OCI-LY7 (cell line): ENCODE measurements at regions of chr10 and their contacts with region 1.

Region 1: DNA sequence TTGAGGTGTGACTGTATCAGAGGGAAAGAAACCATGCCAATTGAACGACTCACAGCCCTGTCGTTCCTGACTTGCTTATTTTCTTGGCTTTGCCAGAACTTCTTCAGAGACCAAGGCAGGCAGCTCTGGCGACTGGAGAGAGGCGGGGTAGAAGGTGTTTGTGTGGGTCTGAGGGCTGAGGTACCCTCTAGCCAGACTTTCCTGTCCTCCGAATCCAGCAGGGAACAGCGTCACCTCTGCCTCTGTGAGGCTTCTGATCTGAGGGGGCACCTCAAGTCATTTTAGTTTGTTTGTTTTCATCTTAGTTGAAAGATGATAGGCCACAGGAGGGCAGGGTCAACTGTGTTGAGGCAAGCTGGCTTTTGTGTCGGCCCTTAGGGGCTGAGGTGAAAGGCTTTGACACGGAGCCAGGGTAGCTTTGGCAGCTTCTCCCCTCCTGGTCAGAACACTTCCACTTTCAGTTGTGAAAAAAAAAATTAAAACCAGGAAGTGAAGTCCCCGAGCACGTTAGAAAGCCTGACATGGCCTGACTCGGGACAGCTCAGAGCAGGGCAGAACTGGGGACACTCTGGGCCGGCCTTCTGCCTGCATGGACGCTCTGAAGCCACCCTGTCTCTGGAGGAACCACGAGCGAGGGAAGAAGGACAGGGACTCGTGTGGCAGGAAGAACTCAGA is 1.9 kb downstream of the ACSL5 start:
- DNase-seq: peak; percentile 80
- H3K4me3 ChIP-seq: peak overlapping the region; percentile 80
- H3K27ac ChIP-seq: peak overlapping the region; percentile 51
- H3K4me1 ChIP-seq: peaks cover 28% of the 10 kb centered on the region
- CTCF ChIP-seq: 0 out of 2 replicates have a peak, but pooled peaks have one; percentile 28

Region 2: DNA sequence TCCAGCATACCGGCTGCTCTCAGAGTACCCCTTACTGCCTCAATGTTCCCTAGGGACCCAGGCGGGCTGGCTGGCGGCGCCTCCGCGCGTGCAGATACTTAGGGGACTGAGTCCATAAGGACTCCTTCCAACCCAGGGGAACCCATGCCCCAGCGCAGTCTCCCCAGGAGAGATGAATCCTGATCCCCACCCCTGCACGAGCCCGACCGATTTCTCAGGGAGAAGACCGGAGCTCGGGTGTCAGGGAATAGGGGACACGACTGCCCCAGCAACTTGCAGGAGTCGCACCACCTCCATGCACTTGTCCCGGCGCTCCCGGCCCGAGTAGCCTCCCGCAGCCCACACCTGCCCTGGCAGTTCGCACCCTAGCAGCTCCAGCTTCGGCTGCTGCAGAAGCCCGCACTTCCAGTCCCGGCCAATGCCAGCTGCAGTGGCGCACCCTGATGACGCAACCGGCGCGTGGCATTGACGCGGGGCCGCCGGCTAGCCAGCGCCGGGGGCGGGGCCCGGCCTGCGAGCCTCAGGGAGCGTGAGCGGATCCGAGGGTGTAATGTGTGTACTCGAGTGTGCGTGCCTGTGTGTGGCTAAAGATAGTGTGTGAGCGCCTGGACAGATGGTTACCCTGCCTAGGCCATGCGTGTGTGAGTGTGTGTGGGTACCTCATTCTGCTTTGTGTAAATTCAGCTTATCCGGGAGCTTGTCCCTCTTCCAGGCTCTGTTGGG is 192.4 kb before region 1 on chr10 and contains the start of gene GPAM:
- CTCF ChIA-PET with region 1: no interaction called
- POLR2A ChIA-PET with region 1: interaction called, 7 read pairs
- intact Hi-C with region 1: loop called (anchors 5 kb)
- DNase-seq: peak; percentile 94
- H3K4me3 ChIP-seq: peak within 1 kb of the TSS; percentile 94
- H3K27ac ChIP-seq: no peak within 1 kb of the TSS
- H3K4me1 ChIP-seq: peaks cover 17% of the 10 kb centered on the region
- CTCF ChIP-seq: no peak
- total RNA-seq, gene GPAM: 6.9 and 7.5 TPM in 2 replicates

Region 3: GRCh38 chr10:112347709-112348671 is 27.9 kb before region 1 on chr10:
- CTCF ChIA-PET with region 1: no interaction called
- POLR2A ChIA-PET with region 1: interaction called, 11 read pairs
- intact Hi-C with region 1: no loop called
- DNase-seq: no peak
- H3K4me3 ChIP-seq: no peak overlapping the region
- H3K27ac ChIP-seq: no peak overlapping the region
- H3K4me1 ChIP-seq: no peaks in the 10 kb centered on the region
- CTCF ChIP-seq: no peak

Region 4: DNA sequence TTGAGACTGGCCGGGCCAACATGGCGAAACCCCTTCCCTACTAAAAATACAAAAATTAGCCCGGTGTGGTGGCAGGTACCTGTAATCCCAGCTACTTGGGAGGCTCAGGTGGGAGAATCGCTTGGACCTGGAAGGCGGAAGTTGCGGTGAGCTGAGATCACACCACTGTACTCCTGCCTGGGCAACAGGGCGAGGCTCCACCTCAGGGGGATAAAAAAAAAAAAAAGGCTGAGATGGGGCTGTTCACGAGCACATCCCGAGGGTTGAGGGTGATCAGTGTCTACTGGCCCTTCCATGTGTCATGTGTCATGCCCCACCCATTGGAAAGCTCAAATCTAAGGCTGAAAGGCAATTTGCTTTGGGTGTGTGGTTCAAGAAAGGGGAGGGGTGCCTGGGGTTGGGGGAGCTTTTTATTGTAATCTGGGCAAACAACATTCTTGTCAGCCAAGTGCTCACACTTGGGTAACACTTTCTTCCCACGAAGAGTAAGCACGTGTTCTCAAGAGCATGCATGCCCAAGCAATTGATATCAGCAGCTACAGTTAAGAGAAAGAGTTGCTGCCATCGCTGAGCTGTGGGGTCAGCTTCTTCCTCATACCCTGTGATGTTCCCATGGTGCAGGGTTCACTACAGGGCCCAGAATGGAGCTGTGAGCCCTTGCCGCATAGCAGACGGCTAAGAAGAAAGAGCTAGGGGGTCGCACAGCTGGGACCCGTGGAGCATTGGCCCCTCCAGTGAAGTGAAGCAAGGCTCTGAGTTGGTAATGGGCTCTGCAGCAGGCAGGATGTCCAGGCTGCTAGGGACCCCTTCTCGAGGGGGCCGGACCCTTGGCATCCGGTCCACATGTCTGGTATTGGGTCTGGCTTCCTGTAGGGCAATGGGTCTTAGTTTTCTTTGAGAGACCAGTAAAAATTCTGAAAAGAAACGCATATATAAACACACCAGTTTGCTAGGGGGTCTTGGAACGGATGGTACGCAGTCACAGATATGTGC is 11.9 kb before region 1 on chr10:
- CTCF ChIA-PET with region 1: interaction called, 4 read pairs
- POLR2A ChIA-PET with region 1: interaction called, 22 read pairs
- intact Hi-C with region 1: no loop called
- DNase-seq: no peak
- H3K4me3 ChIP-seq: no peak overlapping the region
- H3K27ac ChIP-seq: no peak overlapping the region
- H3K4me1 ChIP-seq: no peaks in the 10 kb centered on the region
- CTCF ChIP-seq: no peak

Region 5: DNA sequence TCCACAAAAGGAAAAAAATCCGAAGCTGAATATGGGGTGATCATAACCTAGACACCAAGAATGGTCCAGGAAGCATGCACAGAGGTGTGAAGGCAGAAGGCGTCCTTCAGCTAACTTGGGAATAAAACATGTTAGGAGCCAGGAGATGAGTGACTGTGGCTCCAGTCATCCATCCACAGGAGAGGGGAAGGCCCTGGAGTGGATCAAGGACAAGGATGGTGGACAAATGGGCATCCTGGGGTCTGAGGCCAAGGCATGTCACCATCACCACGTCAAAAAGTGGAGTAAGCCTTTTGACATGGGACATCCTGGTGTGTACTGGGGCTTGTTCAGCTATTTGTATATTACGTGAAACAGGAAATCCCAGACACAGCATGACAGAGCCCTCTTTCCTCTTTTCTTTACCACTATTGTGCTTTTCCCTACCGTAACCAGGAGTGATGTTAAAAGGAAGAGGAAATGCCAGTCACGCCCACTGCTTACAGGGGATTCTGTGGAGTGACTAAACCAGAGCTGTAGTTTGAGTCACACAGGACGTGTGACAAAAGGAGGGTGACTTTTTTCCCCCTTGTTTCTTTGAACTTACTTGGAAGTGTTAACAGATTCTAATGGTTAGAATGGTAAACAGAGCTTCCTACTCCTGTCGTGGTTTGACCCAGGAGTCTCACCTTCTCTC is 13.4 kb after region 1 on chr10:
- CTCF ChIA-PET with region 1: interaction called, 4 read pairs
- POLR2A ChIA-PET with region 1: interaction called, 14 read pairs
- intact Hi-C with region 1: no loop called
- DNase-seq: peak; percentile 17
- H3K4me3 ChIP-seq: no peak overlapping the region
- H3K27ac ChIP-seq: no peak overlapping the region
- H3K4me1 ChIP-seq: peaks cover 8% of the 10 kb centered on the region
- CTCF ChIP-seq: no peak

Region 6: GRCh38 chr10:112446855-112447711 is 71.2 kb after region 1 on chr10 and contains the starts of genes VTI1A and ZDHHC6:
- CTCF ChIA-PET with region 1: interaction called, 3 read pairs
- POLR2A ChIA-PET with region 1: interaction called, 5 read pairs
- intact Hi-C with region 1: loop called (anchors 2 kb)
- DNase-seq: peak; percentile 88
- H3K4me3 ChIP-seq: peak within 1 kb of the TSS; percentile 100
- H3K27ac ChIP-seq: peak within 1 kb of the TSS; percentile 59
- H3K4me1 ChIP-seq: peaks cover 30% of the 10 kb centered on the region
- CTCF ChIP-seq: peak; percentile 42
- total RNA-seq, gene VTI1A: 39.4 and 70.8 TPM in 2 replicates
- total RNA-seq, gene ZDHHC6: 29.9 and 31.5 TPM in 2 replicates